ENCODE measurements at regions of chr16 and their contacts with region 1.

Region 1: GRCh38 chr16:22342082-22342481 is 32.3 kb downstream of the CDR2 start:
- DNase-seq: no peak
- H3K4me3 ChIP-seq: no peak overlapping the region
- H3K27ac ChIP-seq: no peak overlapping the region
- H3K4me1 ChIP-seq: peaks cover under 1 to 4% of the 10 kb centered on the region in 2 donors
- H3K27me3 ChIP-seq: no peaks in the 10 kb centered on the region
- CTCF ChIP-seq: no peak
- POLR2A ChIP-seq: no peak

Region 2: GRCh38 chr16:22262460-22262859 is 79.6 kb before region 1 on chr16:
- intact Hi-C with region 1: no loop called
- DNase-seq: no peak
- H3K4me3 ChIP-seq: no peak overlapping the region
- H3K27ac ChIP-seq: no peak overlapping the region
- H3K4me1 ChIP-seq: no peaks in the 10 kb centered on the region
- H3K27me3 ChIP-seq: no peaks in the 10 kb centered on the region
- CTCF ChIP-seq: no peak
- POLR2A ChIP-seq: no peak

Region 3: DNA sequence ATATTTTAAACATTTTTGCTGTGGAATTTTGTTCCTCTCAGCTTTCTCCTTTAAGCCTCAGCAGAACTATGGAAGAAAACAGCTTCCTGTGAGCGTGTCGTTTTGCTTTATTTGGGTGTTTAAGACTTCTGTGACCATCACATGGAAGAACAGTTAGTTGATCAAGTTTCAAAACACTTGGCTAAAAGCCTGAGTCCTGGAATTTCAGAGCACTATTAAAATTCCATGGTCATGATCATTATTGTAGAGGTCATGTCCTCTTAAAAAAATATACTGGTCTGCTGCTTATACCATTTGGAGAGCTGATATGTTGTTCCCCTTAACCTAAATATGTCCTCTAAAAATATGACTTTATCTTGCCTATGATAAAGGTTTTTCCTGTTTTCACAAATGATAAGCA is 44.9 kb after region 1 on chr16:
- intact Hi-C with region 1: loop called (anchors 2 kb)
- DNase-seq: no peak
- H3K4me3 ChIP-seq: no peak overlapping the region
- H3K27ac ChIP-seq: peak overlapping the region; percentile 86 to 96 (median 88)
- H3K4me1 ChIP-seq: peaks cover 20 to 27% of the 10 kb centered on the region in 2 donors
- H3K27me3 ChIP-seq: no peaks in the 10 kb centered on the region
- CTCF ChIP-seq: no peak
- POLR2A ChIP-seq: peak in 1 of 2 donors; percentile 56

Measured in thyroid gland (tissue), 4 donors.